MCF 10A (cell line): ENCODE measurements at regions of chr2 and their contacts with region 1.

Region 1: DNA sequence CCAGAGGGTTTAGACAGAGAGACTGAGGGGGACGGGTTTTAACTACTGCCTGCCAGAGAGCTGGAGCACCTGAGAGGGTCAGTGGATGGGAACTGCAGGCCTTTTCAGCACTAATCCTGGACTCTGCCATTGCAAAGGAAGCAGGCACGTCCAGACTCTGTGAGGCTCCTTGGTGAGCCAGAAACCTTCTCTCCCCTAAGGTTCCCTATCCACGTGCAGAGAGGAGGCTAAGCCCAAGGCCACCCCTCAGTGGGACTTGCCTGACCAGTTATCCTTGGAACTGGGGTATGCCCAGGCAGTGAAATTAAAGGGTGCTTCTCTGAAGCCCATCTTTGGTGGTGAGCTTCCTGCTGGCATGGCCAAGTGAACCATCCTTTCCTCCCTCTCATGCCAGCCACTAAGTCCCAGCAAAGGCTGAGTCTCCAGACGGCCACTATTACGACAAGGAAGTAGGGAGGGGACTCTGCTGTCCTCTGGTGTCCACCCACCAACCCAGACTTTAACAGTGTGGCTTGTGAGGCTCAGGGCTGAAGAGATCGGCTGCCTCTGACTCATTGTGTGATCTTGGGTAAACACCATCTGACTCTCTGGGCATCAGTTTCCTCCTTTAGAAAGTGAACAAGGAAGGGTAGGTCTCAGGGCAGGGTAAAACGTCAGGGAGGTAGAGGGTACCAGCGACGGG is 3.9 kb upstream of the MLPH start:
- DNase-seq: peak; percentile 78
- H3K4me3 Mint-ChIP-seq: peak overlapping the region; percentile 26
- H3K27ac Mint-ChIP-seq: peak overlapping the region; percentile 93
- H3K4me1 Mint-ChIP-seq: peaks cover 21% of the 10 kb centered on the region
- H3K27me3 Mint-ChIP-seq: no peaks in the 10 kb centered on the region
- CTCF ChIP-seq: peak; percentile 14

Region 2: GRCh38 chr2:237558906-237559641 is 75.9 kb after region 1 on chr2:
- CTCF ChIA-PET with region 1: no interaction called
- POLR2A ChIA-PET with region 1: no interaction called
- intact Hi-C with region 1: loop called (anchors 2 kb)
- DNase-seq: peak; percentile 86
- H3K4me3 Mint-ChIP-seq: peak overlapping the region; percentile 34
- H3K27ac Mint-ChIP-seq: no peak overlapping the region
- H3K4me1 Mint-ChIP-seq: peaks cover 25% of the 10 kb centered on the region
- H3K27me3 Mint-ChIP-seq: peaks cover 11% of the 10 kb centered on the region
- CTCF ChIP-seq: no peak

Region 3: DNA sequence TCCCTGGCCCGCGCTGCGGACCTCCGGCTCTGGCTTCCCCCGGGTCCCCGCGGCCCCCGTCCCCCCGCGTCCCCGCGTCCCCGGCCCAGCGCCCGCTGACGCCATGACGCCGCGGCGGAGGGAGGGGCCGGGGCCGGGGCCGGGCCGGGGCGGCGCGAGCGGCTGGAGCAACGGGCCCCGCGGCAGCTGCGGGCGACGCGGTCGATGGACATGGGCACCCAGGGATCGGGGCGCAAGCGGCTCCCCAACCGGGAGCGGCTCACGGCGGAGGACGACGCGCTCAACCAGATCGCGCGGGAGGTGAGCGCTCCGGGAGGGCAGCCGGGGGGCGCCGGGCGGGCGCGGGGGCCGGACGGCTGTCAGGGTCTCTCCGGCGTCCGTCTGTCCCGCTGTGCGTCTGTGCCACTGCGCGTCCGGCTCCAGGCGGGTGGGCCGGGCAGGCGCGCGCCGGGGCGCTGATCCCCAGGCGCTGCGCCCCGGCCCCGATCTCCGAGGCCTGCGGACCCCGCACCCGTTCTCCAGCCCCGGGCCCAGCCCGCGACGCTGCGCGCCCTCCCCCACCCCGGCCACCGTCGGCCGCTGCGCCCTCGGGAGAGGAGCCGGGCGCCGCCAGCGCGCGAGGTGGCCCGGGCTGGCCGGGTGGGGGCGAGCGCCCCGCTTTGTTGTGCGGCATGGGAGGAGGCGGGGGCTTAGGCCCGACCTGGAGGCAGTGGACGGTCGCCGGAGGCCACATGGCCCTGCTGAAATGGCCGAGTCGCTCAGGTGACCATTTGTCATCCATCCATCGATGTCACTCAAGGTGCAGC is 144.5 kb after region 1 on chr2 and contains the start of gene LRRFIP1:
- CTCF ChIA-PET with region 1: no interaction called
- POLR2A ChIA-PET with region 1: no interaction called
- intact Hi-C with region 1: no loop called
- DNase-seq: no peak
- H3K4me3 Mint-ChIP-seq: peak within 1 kb of the TSS; percentile 65
- H3K27ac Mint-ChIP-seq: no peak within 1 kb of the TSS
- H3K4me1 Mint-ChIP-seq: no peaks in the 10 kb centered on the region
- H3K27me3 Mint-ChIP-seq: peaks cover 41% of the 10 kb centered on the region
- CTCF ChIP-seq: no peak
- total RNA-seq, gene LRRFIP1: 197 and 201 TPM in 2 replicates